ENCODE measurements at regions of chr4 and their contacts with region 1.

Region 1: DNA sequence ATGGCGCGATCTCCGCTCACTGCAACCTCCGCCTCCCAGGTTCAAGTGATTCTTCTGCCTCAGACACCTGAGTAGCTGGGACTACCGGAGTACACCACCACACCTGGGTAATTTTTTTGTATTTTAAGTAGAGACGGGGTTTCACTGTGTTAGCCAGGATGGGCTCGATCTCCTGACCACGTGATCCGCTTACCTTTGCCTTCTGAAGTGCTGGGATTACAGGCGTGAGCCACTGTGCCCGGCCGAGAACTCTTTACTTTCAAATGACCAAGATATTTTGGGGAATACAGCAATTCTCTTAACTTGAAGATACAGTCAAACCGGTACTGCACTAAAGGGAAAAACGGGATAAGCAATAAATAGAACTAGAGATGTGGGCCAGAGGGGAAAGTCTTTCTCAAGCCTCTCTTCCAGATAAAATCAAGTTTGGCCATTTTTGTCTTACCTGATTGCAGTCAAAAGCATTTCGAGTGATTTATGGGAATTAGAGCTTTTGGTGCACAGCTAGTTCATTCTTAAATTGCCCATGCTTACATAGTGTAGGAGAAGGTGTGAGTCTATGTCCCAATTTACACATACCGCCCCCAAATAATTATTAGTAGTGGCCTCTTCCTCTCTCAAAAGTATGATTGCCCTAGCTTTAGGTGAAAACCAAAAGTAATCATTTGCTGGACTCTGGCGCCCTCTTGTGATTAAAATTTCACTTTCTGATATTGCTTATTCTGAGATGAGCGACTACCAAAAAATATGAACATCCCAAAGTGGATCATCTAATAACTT is 53.2 kb upstream of the ABCG2 start:
- DNase-seq: peak; percentile 63
- H3K4me3 ChIP-seq: no peak overlapping the region
- H3K27ac ChIP-seq: no peak overlapping the region
- H3K4me1 ChIP-seq: no peaks in the 10 kb centered on the region
- H3K27me3 ChIP-seq: no peaks in the 10 kb centered on the region
- CTCF ChIP-seq: peak; percentile 46

Region 2: GRCh38 chr4:87848622-87849351 is 362.9 kb before region 1 on chr4:
- intact Hi-C with region 1: loop called (anchors 10 kb)
- DNase-seq: peak; percentile 43
- H3K4me3 ChIP-seq: no peak overlapping the region
- H3K27ac ChIP-seq: no peak overlapping the region
- H3K4me1 ChIP-seq: no peaks in the 10 kb centered on the region
- H3K27me3 ChIP-seq: no peaks in the 10 kb centered on the region
- CTCF ChIP-seq: peak; percentile 49

Region 3: GRCh38 chr4:88033309-88033708 is 178.4 kb before region 1 on chr4:
- intact Hi-C with region 1: loop called (anchors 5 kb)
- DNase-seq: peak; percentile 60
- H3K4me3 ChIP-seq: no peak overlapping the region
- H3K27ac ChIP-seq: no peak overlapping the region
- H3K4me1 ChIP-seq: no peaks in the 10 kb centered on the region
- H3K27me3 ChIP-seq: no peaks in the 10 kb centered on the region
- CTCF ChIP-seq: peak; percentile 60

Region 4: GRCh38 chr4:88054901-88055300 is 156.8 kb before region 1 on chr4:
- intact Hi-C with region 1: loop called (anchors 5 kb)
- DNase-seq: peak; percentile 32
- H3K4me3 ChIP-seq: no peak overlapping the region
- H3K27ac ChIP-seq: no peak overlapping the region
- H3K4me1 ChIP-seq: no peaks in the 10 kb centered on the region
- H3K27me3 ChIP-seq: no peaks in the 10 kb centered on the region
- CTCF ChIP-seq: peak; percentile 53

Region 5: DNA sequence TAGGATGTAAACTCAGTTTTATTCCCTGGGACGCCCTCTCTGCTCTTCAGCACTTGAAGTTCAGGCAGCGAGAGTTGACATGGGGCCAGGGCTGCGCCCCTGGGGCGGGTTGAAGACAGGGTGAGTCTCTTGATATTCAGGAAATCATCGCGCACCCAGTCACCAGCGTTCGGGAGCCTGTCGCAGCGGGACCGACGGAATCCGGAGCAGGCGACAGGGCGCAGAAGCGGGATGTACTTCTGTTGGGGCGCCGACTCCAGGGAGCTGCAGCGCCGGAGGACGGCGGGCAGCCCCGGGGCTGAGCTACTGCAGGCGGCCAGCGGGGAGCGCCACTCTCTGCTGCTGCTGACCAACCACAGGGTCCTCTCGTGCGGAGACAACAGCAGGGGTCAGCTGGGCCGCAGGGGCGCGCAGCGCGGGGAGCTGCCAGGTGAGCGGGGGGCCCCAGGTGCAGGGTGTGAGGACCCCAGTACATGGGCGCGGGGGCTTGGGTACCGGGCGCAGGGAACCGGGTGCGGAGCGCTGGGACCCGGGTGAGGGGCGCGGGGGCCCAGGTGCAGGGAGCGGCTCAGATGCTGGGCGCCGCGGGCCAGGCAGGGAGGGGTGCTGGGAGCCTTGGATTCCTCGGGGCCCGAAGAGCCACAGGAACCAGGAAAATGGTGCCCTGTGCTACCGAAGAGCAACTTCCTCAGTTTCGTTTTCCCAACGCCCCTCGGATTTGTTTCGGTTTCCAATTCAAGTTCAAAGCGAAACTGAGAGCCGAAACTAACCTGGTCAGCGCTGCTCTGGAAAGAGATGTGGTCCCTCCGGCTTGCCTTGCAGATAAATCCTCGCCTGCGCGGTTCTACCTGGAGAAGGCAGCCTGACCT is 167.3 kb after region 1 on chr4 and contains the start of gene HERC6:
- intact Hi-C with region 1: loop called (anchors 10 kb)
- DNase-seq: peak; percentile 82
- H3K4me3 ChIP-seq: peak within 1 kb of the TSS; percentile 94
- H3K27ac ChIP-seq: peak within 1 kb of the TSS; percentile 97
- H3K4me1 ChIP-seq: no peaks in the 10 kb centered on the region
- H3K27me3 ChIP-seq: no peaks in the 10 kb centered on the region
- CTCF ChIP-seq: peak; percentile 69
- total RNA-seq, gene HERC6: 6.2 to 6.3 TPM